Activated T-helper 2 cell treated with anti-CD3 and anti-CD28 coated beads, Interferon-gamma antibody, Interleukin-2, Interleukin-4, amounts not matched to agents 10 μg/mL and 5 μg/mL and 100 μg/mL, durations not matched to agents 14 hours and 24 hours and 36 hours (primary cell): ENCODE measurements at regions of chr9 and their contacts with region 1.

Region 1: DNA sequence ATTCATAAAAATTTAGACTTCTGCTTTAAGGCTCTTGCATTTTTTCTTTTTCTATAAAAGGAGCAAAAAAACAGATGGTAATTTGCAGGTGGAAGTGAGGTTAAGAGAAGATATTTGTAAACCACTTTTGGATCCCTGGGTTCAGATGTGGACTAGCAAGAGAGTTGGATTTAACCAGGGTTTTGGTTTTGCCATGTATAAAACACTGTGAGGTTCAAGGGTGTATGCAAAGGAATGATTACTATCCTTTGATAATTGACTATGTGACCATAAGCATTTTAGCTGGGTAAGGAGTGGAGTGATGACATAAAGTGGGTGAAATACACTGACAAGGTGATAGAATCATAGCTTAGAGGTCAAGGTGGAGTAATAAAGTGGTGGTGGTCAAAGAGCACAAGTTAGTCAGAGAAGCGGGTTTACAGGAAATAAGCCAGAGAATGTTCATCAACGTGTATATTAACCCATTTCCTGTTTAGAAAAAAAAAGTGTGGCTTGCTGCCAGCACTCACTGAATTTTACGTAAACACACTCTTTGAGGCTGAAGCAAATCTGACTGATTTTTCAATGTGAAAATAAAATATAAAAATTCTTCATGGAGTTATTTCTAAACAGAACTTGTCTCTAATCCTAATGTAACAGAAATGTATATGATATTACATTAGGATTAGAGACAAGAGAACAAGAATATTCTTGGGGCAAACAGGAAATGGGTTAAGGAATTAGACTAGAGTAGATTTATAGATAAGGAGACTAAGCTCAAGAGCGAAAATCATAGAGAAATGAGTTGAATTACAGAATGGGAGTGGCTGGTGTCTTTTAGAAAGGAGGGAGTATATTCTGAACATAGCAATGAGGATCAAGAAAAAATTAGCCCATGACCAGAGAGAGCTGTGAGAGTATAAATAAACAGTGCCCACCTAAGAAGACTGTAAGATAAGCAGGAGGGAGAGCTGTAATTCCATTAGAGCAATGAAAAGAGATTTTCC is 74.5 kb downstream of the CDKN2A start:
- DNase-seq: peak; percentile 14
- H3K4me3 Mint-ChIP-seq: peak overlapping the region; percentile 47
- H3K27ac Mint-ChIP-seq: peak overlapping the region; percentile 68
- H3K4me1 Mint-ChIP-seq: peaks cover 33% of the 10 kb centered on the region
- H3K27me3 Mint-ChIP-seq: no peaks in the 10 kb centered on the region

Region 2: DNA sequence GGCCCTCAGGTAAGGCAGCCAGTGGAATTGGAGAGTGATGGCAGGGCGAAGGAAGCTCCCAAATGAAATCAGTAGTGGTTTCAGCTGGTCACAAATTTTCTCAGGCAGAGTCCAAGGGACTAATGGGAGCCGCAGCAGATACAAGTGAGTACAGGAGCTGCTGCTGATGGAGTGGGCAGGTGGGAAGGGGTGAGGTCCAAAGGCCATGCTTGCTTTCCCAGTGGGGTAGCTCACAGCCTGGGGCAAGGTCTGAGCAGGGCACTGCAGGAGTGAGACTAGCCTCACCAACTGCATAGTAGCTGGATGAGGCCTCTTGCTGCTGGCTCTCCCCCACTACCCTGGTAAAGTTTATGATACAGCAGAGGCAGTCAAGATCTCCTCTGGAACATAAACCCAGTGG is 79.0 kb before region 1 on chr9:
- intact Hi-C with region 1: no loop called
- DNase-seq: no peak
- H3K4me3 Mint-ChIP-seq: no peak overlapping the region
- H3K27ac Mint-ChIP-seq: no peak overlapping the region
- H3K4me1 Mint-ChIP-seq: peaks cover 9% of the 10 kb centered on the region
- H3K27me3 Mint-ChIP-seq: no peaks in the 10 kb centered on the region

Region 3: GRCh38 chr9:21862871-21863270 is 56.8 kb before region 1 on chr9:
- intact Hi-C with region 1: loop called (anchors 5 kb)
- DNase-seq: no peak
- H3K4me3 Mint-ChIP-seq: no peak overlapping the region
- H3K27ac Mint-ChIP-seq: no peak overlapping the region
- H3K4me1 Mint-ChIP-seq: peaks cover 11% of the 10 kb centered on the region
- H3K27me3 Mint-ChIP-seq: no peaks in the 10 kb centered on the region